Endothelial cell of umbilical vein (primary cell): ENCODE measurements at regions of chr19 and their contacts with region 1.

Region 1: DNA sequence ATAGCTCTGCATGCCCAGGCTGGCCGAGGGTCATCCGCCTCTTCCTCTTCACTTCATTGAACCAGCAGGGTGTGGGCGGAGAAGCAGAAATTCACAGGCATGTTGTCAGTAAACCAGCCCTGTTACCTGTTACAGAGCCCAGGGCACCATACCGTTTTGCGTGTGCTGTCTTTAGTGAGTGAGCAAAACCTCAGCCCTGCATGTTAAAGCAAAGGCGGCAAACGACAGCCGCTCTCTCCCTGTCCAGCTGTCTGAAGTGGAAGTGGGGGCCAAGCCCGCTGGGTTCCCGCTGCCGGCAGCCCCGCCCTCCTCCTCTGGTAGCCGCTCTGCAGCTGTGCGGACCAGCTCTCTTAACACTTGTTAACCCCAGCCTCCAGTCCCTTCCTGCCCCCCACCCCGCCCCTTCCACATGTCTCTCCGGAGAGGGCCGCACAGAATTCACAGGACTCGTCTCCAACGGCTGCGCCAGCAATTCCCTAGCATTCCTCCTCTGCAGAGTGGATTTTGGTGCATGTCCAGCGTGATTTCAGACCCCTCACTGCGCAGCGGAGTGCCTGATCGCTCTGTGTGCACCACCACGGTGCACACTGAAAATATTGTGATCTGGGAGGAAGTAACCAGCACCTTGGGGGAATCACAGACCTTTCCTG is 12.7 kb downstream of the KLHL26 start:
- DNase-seq: peak; percentile 68
- H3K4me3 ChIP-seq: no peak overlapping the region
- H3K27ac ChIP-seq: peak overlapping the region; percentile 67
- H3K4me1 ChIP-seq: peaks cover 30% of the 10 kb centered on the region
- H3K27me3 ChIP-seq: no peaks in the 10 kb centered on the region
- CTCF ChIP-seq: no peak
- POLR2A ChIP-seq: no peak

Region 2: GRCh38 chr19:18603255-18603957 is 46.1 kb before region 1 on chr19:
- CTCF ChIA-PET with region 1: no interaction called
- POLR2A ChIA-PET with region 1: no interaction called
- dilution Hi-C with region 1: no loop called
- intact Hi-C with region 1: loop called (anchors 5 kb)
- DNase-seq: no peak
- H3K4me3 ChIP-seq: no peak overlapping the region
- H3K27ac ChIP-seq: no peak overlapping the region
- H3K4me1 ChIP-seq: no peaks in the 10 kb centered on the region
- H3K27me3 ChIP-seq: peaks cover 39 to 46% of the 10 kb centered on the region in 2 experiments
- CTCF ChIP-seq: peak; percentile 12 to 42
- POLR2A ChIP-seq: no peak

Region 3: DNA sequence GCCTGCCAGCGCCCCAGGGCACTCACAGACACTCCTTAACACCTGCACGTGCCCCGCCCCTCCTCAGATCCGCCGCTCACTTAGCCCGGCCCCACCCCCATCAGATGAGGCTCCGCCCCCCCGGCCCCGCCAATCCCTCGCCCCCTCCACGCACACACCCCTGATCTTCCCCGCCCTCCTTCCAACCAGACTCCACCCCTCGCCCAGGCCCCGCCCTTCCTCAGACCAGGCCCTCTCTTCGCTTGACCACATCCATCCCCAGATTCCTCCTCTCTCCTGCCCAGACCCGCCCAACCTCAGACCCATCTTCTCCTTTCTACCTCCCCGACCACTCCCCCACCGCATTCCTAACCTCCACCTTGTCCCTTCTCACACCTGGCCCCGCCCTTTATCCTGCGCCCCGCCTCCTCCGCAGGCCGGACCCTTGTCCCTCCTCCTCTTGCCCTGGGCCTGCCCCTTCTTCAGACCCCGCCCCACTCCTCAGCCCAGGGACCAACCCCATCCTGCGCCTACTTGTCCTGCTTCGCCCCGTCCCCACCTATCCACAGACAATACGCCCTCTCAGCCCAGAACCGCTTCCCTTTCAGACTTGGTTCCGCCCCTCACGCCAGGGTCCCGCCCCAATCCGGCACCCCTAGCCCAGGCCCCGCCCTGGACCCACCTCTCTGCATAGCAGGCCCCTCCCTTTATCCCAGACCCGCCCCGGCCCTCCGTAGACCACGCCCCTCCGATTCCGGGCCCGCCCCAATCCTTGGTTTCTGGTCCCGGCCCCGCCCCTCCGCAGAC is 13.1 kb before region 1 on chr19:
- CTCF ChIA-PET with region 1: interaction called, 8 read pairs
- POLR2A ChIA-PET with region 1: no interaction called
- dilution Hi-C with region 1: no loop called
- intact Hi-C with region 1: loop called (anchors 2 kb)
- DNase-seq: peak; percentile 96
- H3K4me3 ChIP-seq: peak overlapping the region in 2 of 3 experiments; percentile 3 to 60
- H3K27ac ChIP-seq: no peak overlapping the region
- H3K4me1 ChIP-seq: peaks cover 4% of the 10 kb centered on the region
- H3K27me3 ChIP-seq: no peaks in the 10 kb centered on the region
- CTCF ChIP-seq: no peak
- POLR2A ChIP-seq: no peak

Region 4: GRCh38 chr19:18683213-18683939 is 33.9 kb after region 1 on chr19 and contains the start of gene CRTC1:
- CTCF ChIA-PET with region 1: interaction called, 3 read pairs
- POLR2A ChIA-PET with region 1: no interaction called
- dilution Hi-C with region 1: no loop called
- intact Hi-C with region 1: loop called (anchors 1 kb)
- DNase-seq: peak; percentile 87
- H3K4me3 ChIP-seq: peak within 1 kb of the TSS in 2 of 3 experiments; percentile 65 to 88
- H3K27ac ChIP-seq: no peak within 1 kb of the TSS
- H3K4me1 ChIP-seq: peaks cover 10% of the 10 kb centered on the region
- H3K27me3 ChIP-seq: no peaks in the 10 kb centered on the region
- CTCF ChIP-seq: peak in 1 of 2 donors; percentile 7
- POLR2A ChIP-seq: peak; percentile 71
- total RNA-seq, gene CRTC1: 10.3 and 11.4 TPM in 2 replicates